Activated naive CD4-positive, alpha-beta T cell treated with anti-CD3 and anti-CD28 coated beads for 36 hours (primary cell): ENCODE measurements at regions of chr1 and their contacts with region 1.

Region 1: GRCh38 chr1:153677718-153678505 is 576 bp upstream of the NPR1 start:
- DNase-seq: peak; percentile 63
- H3K4me3 Mint-ChIP-seq: peak overlapping the region; percentile 71
- H3K27ac Mint-ChIP-seq: no peak overlapping the region
- H3K4me1 Mint-ChIP-seq: peaks cover 20% of the 10 kb centered on the region
- H3K27me3 Mint-ChIP-seq: peaks cover 31% of the 10 kb centered on the region

Region 2: GRCh38 chr1:152495066-152495675 is 1182.7 kb before region 1 on chr1:
- CTCF ChIA-PET with region 1: no interaction called
- intact Hi-C with region 1: no loop called
- DNase-seq: peak; percentile 44
- H3K4me3 Mint-ChIP-seq: no peak overlapping the region
- H3K27ac Mint-ChIP-seq: no peak overlapping the region
- H3K4me1 Mint-ChIP-seq: no peaks in the 10 kb centered on the region
- H3K27me3 Mint-ChIP-seq: peaks cover 9% of the 10 kb centered on the region

Region 3: DNA sequence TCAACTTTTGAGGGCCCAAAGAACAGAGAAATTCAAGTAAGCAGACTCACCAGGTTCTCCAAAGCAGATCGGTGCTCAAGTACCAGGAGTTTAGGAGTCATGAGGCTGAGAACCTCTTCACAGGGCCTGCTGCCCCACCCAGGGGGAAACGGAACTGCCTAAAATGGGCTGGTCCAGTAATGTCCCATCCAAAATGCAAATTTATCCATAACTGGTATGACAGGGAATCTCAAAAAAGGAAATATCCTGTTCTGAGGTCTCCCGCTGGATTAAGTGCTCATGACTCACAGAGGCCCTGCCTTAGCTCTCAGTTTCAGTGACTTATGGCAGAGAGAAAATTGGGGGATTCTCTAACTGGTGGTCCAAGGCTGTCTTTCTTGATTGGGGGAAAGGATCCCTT is 536.5 kb before region 1 on chr1:
- CTCF ChIA-PET with region 1: no interaction called
- intact Hi-C with region 1: no loop called
- DNase-seq: no peak
- H3K4me3 Mint-ChIP-seq: no peak overlapping the region
- H3K27ac Mint-ChIP-seq: no peak overlapping the region
- H3K4me1 Mint-ChIP-seq: no peaks in the 10 kb centered on the region
- H3K27me3 Mint-ChIP-seq: peaks cover 22% of the 10 kb centered on the region

Region 4: DNA sequence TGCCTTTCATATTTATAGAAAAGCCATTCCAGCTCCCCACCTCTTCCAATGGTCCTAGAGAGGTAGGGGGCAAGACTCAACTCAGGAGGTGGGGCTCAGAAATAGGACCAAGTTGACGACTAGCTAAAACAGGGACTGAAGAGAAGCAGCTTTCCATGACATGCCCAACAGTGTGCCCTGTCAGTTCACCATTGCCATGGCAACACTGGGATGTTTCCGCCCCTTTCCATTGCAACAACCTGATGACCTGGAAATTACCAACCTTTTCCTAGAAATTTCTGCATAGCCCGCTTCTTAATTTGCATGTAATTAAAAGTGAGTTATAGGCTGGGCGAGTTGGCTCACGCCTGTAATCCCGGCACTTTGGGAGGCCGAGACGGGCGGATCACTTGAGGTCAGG is 27.6 kb after region 1 on chr1:
- CTCF ChIA-PET with region 1: no interaction called
- intact Hi-C with region 1: no loop called
- DNase-seq: no peak
- H3K4me3 Mint-ChIP-seq: no peak overlapping the region
- H3K27ac Mint-ChIP-seq: no peak overlapping the region
- H3K4me1 Mint-ChIP-seq: no peaks in the 10 kb centered on the region
- H3K27me3 Mint-ChIP-seq: no peaks in the 10 kb centered on the region

Region 5: DNA sequence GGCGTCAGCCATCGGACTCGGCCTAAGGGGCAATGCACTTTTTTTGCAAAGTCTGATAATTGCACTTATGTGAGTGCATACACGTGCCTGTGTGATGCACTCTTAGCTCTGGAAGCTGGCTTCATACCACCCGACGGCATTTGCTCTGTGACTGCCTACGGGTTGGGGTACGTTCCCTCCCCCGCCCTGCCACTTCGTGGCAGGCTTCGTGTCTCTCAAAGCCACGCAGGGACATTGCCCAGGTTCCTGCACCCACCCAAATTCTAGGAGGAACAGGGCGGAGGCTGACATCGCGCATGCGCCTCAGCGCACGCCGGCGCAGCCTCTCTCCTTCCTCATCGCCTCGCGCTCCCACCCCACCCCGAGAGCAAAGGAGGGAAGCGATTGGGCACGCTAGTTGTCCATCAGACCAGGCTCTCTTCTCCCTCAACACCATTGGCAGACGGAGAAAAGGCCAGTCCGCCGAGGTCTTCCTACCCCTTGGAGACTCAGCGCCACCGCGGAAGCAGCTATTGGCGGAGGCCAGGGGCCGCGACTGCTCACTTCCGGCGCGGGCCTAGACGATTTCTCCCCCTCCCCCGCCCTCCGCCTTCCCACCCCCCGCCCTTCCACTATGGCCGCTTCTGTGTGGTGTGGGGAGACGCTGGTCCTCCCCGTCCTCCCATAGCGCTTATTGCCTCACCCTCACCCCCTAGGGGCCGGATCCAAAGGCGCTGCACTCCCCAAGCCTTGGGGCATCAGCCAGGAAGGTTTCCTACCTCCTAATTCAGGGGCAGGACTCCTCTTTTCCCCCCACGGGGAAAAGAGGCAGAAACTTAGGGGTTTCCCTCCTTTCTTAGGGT is 49.8 kb after region 1 on chr1 and contains the start of gene INTS3:
- CTCF ChIA-PET with region 1: no interaction called
- intact Hi-C with region 1: no loop called
- DNase-seq: peak; percentile 100
- H3K4me3 Mint-ChIP-seq: peak within 1 kb of the TSS; percentile 97
- H3K27ac Mint-ChIP-seq: peak within 1 kb of the TSS; percentile 95
- H3K4me1 Mint-ChIP-seq: peaks cover 39% of the 10 kb centered on the region
- H3K27me3 Mint-ChIP-seq: no peaks in the 10 kb centered on the region
- total RNA-seq, gene INTS3: 39.3 to 40.4 TPM

Region 6: GRCh38 chr1:153749408-153750005 is 71.6 kb after region 1 on chr1:
- CTCF ChIA-PET with region 1: interaction called, 52 read pairs
- intact Hi-C with region 1: loop called (anchors 1 kb)
- DNase-seq: peak; percentile 90
- H3K4me3 Mint-ChIP-seq: no peak overlapping the region
- H3K27ac Mint-ChIP-seq: no peak overlapping the region
- H3K4me1 Mint-ChIP-seq: peaks cover 2% of the 10 kb centered on the region
- H3K27me3 Mint-ChIP-seq: no peaks in the 10 kb centered on the region

Region 7: DNA sequence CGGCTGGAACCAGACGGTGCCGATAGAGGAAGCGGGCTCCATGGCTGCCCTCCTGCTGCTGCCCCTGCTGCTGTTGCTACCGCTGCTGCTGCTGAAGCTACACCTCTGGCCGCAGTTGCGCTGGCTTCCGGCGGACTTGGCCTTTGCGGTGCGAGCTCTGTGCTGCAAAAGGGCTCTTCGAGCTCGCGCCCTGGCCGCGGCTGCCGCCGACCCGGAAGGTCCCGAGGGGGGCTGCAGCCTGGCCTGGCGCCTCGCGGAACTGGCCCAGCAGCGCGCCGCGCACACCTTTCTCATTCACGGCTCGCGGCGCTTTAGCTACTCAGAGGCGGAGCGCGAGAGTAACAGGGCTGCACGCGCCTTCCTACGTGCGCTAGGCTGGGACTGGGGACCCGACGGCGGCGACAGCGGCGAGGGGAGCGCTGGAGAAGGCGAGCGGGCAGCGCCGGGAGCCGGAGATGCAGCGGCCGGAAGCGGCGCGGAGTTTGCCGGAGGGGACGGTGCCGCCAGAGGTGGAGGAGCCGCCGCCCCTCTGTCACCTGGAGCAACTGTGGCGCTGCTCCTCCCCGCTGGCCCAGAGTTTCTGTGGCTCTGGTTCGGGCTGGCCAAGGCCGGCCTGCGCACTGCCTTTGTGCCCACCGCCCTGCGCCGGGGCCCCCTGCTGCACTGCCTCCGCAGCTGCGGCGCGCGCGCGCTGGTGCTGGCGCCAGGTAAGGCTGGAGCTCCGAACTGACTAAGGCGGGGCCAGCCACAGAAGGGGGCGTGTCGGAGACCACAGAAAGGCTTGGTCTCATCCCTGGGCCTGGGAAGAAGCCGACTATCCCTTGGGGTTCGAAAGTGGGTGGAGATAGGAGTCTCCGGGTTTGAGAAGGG is 97.8 kb after region 1 on chr1:
- CTCF ChIA-PET with region 1: interaction called, 3 read pairs
- intact Hi-C with region 1: loop called (anchors 1 kb)
- DNase-seq: peak; percentile 60
- H3K4me3 Mint-ChIP-seq: peak overlapping the region; percentile 69
- H3K27ac Mint-ChIP-seq: no peak overlapping the region
- H3K4me1 Mint-ChIP-seq: peaks cover 9% of the 10 kb centered on the region
- H3K27me3 Mint-ChIP-seq: no peaks in the 10 kb centered on the region

Region 8: DNA sequence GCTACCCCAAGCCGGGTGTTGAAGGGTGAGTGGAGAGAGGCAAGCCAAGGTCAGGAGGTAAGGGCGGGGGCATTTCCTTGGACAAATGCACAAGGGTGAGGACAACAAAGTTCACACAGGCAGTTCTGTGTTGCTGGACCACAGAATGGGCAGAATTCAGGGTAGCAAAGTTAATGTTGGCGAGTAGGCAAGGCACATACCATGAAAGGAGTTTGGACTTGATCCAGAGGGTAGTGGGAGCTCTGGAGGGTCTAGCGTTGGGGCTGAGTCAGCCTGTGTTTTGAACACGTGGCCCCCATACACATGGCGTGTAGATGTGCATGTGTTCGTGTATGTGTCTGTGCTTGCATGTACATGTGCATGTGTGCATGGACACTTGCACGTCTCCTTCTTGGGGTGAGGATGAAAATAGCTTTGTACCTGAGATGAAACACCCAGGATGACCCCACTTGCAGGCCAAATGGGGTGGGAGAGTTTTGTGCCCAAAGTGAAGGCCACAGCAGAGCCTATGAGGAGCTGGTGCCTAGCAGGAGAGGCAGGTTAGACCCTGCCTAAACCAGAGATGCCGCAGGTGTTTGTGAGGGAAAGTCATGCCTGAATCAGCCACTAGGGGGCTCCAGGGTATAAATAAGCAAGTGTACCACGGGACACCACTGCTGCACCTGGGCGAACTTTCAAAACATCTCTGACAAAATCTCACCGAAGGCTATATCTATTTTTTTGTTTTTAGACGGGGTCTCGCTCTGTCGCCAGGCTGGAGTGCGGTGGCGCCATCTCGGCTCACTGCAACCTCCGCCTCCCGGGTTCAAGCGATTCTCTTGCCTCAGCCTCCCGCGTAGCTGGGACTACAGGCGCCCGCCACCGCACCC is 119.1 kb after region 1 on chr1:
- CTCF ChIA-PET with region 1: interaction called, 4 read pairs
- intact Hi-C with region 1: loop called (anchors 5 kb)
- DNase-seq: peak; percentile 95
- H3K4me3 Mint-ChIP-seq: no peak overlapping the region
- H3K27ac Mint-ChIP-seq: no peak overlapping the region
- H3K4me1 Mint-ChIP-seq: peaks cover 2% of the 10 kb centered on the region
- H3K27me3 Mint-ChIP-seq: no peaks in the 10 kb centered on the region